GM10248 (cell line): ENCODE measurements at regions of chr2 and their contacts with region 1.

Region 1: GRCh38 chr2:57701391-57701815 is 345.2 kb upstream of the VRK2 start:
- DNase-seq: no peak
- CTCF ChIP-seq: no peak

Region 2: GRCh38 chr2:57674743-57675420 is 26.5 kb before region 1 on chr2:
- CTCF ChIA-PET with region 1: no interaction called
- POLR2A ChIA-PET with region 1: no interaction called
- DNase-seq: no peak
- CTCF ChIP-seq: no peak

Region 3: GRCh38 chr2:57720728-57721627 is 19.6 kb after region 1 on chr2:
- CTCF ChIA-PET with region 1: interaction called, 12 read pairs
- POLR2A ChIA-PET with region 1: no interaction called
- DNase-seq: peak; percentile 65
- CTCF ChIP-seq: peak; percentile 72